ENCODE measurements at regions of chr15 and their contacts with region 1.

Region 1: GRCh38 chr15:40952901-40953712 is at the start of gene CHAC1:
- DNase-seq: peak; percentile 96
- ATAC-seq: peak; percentile 91
- H3K4me3 ChIP-seq: peak within 1 kb of the TSS; percentile 70
- H3K27ac ChIP-seq: peak within 1 kb of the TSS; percentile 96
- H3K4me1 ChIP-seq: peaks cover 31% of the 10 kb centered on the region
- H3K27me3 ChIP-seq: no peaks in the 10 kb centered on the region
- CTCF ChIP-seq: no peak
- POLR2A ChIP-seq: peak; percentile 97
- RAD21 ChIP-seq: peak; percentile 10
- total RNA-seq, gene CHAC1: 41.9 and 51.3 TPM in 2 replicates

Region 2: DNA sequence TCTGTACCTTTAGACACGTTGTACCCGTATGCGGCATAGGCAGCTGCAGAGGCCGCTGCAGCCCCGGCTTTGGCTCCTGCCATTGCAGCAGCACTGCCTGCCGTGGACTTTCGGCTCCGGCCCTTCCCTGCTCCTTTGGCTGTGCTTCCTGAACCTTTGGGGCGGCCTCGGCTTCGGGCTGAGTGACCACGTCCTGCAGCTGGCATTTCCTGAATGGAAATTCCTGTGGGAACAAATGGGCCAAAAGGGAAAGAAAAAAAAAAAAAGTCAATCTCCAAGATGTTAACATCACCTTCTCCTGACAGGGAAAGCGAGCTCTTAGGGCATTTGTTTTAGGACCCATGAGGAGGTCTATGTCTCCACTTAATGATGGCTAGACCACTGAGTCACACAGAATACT is 29.7 kb after region 1 on chr15:
- CTCF ChIA-PET with region 1: no interaction called
- POLR2A ChIA-PET with region 1: interaction called, 3 read pairs
- dilution Hi-C with region 1: no loop called
- in situ Hi-C with region 1: no loop called
- intact Hi-C with region 1: loop called (anchors 2 kb)
- DNase-seq: peak; percentile 93
- ATAC-seq: peak; percentile 66
- H3K4me3 ChIP-seq: no peak overlapping the region
- H3K27ac ChIP-seq: peak overlapping the region; percentile 94
- H3K4me1 ChIP-seq: peaks cover 31% of the 10 kb centered on the region
- H3K27me3 ChIP-seq: no peaks in the 10 kb centered on the region
- CTCF ChIP-seq: 0 out of 2 replicates have a peak, but pooled peaks have one; percentile 3
- POLR2A ChIP-seq: no peak
- RAD21 ChIP-seq: peak; percentile 15

Region 3: GRCh38 chr15:41022487-41023090 is 69.5 kb after region 1 on chr15:
- CTCF ChIA-PET with region 1: interaction called, 11 read pairs
- POLR2A ChIA-PET with region 1: interaction called, 6 read pairs
- dilution Hi-C with region 1: no loop called
- in situ Hi-C with region 1: no loop called
- intact Hi-C with region 1: loop called (anchors 5 kb)
- DNase-seq: peak; percentile 75
- ATAC-seq: peak; percentile 69
- H3K4me3 ChIP-seq: no peak overlapping the region
- H3K27ac ChIP-seq: no peak overlapping the region
- H3K4me1 ChIP-seq: peaks cover 14% of the 10 kb centered on the region
- H3K27me3 ChIP-seq: no peaks in the 10 kb centered on the region
- CTCF ChIP-seq: peak; percentile 90
- POLR2A ChIP-seq: peak; percentile 43; the same call in 1 of the 2 replicates
- RAD21 ChIP-seq: peak; percentile 93

Region 4: DNA sequence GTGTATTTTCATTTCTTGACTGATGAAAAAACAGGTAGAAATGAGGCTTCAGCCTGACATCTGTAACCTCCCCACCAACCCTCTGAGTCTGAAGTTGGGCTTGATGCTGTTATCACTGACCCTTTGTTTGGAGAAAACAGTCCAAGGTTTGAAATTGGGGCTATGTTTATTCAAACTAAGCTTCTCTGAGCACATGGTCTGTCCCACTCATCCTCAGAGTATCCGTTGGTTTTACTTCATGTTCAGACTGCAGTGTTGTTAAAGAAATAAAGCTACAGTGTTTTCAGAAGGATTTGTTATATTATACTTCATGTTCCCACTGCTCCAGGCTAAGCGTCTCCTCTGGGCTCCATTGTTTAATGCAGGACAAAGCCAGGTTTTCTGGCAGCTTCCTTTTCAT is 827.2 kb after region 1 on chr15:
- CTCF ChIA-PET with region 1: no interaction called
- POLR2A ChIA-PET with region 1: interaction called, 12 read pairs
- dilution Hi-C with region 1: no loop called
- in situ Hi-C with region 1: no loop called
- intact Hi-C with region 1: no loop called
- DNase-seq: peak; percentile 80
- ATAC-seq: peak; percentile 85
- H3K4me3 ChIP-seq: no peak overlapping the region
- H3K27ac ChIP-seq: peak overlapping the region; percentile 18; the same call in 1 of the 2 replicates
- H3K4me1 ChIP-seq: peaks cover 15% of the 10 kb centered on the region
- H3K27me3 ChIP-seq: no peaks in the 10 kb centered on the region
- CTCF ChIP-seq: no peak
- POLR2A ChIP-seq: no peak
- RAD21 ChIP-seq: no peak

Measured in IMR-90 (cell line).